ENCODE measurements at regions of chr3 and their contacts with region 1.

Region 1: DNA sequence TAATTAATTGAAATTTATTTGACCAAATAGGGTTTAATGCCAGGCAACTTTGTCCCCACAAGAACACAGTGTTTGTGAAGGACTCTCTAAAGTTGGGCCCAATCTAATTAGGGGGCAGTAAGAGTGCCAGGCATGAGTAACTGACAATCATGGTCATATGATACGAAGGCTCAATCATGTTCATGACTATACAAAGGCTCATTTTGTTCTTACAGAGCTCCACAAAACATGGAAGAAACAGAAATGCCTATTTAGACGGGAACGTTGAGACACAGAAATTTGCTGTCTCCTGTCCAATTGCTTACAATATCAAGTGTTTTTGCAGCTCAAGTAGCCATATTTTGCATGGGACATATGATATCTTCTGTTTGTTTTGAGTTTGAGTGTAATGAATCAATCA is 391.1 kb downstream of the SI start:
- DNase-seq: no peak
- ATAC-seq: no peak
- H3K4me3 ChIP-seq: no peak overlapping the region
- H3K27ac ChIP-seq: no peak overlapping the region
- H3K4me1 ChIP-seq: no peaks in the 10 kb centered on the region
- H3K27me3 ChIP-seq: no peaks in the 10 kb centered on the region
- CTCF ChIP-seq: no peak
- POLR2A ChIP-seq: no peak

Region 2: GRCh38 chr3:164748626-164749025 is 61.4 kb after region 1 on chr3:
- intact Hi-C with region 1: loop called in 1 of 10 experiments (anchors 10 kb)
- DNase-seq: no peak
- ATAC-seq: no peak
- H3K4me3 ChIP-seq: no peak overlapping the region
- H3K27ac ChIP-seq: no peak overlapping the region
- H3K4me1 ChIP-seq: no peaks in the 10 kb centered on the region
- H3K27me3 ChIP-seq: no peaks in the 10 kb centered on the region
- CTCF ChIP-seq: no peak
- POLR2A ChIP-seq: no peak

Measured in heart left ventricle (tissue), 16 donors.